Right cardiac atrium (tissue), 5 donors: ENCODE measurements at regions of chrX and their contacts with region 1.

Region 1: GRCh38 chrX:44105228-44105914 is 132.2 kb upstream of the NDP start:
- DNase-seq: no peak
- ATAC-seq: no peak
- H3K4me3 ChIP-seq: no peak overlapping the region
- H3K27ac ChIP-seq: no peak overlapping the region
- H3K4me1 ChIP-seq: no peaks in the 10 kb centered on the region
- H3K27me3 ChIP-seq: no peaks in the 10 kb centered on the region

Region 2: DNA sequence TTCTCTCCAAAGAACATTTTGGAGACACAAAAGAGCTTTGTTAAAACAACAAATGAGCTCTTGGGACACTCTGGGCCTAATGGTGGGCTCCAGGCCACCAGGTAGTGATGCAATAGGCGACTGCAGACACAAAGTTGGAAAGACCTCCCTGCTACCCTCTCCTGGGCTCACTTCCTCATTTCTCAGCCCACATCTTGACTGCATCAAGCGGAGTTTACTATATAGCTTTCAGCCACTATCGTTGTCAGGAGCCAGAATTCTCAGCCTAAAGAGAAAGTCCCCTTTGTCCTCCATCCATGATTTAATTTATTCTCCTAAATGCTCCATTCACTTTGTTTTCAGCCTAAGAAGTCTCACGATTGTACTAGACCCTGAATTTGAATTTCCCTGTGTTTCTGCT is 123.2 kb after region 1 on chrX:
- intact Hi-C with region 1: no loop called
- DNase-seq: peak in 1 of 3 donors; percentile 40
- ATAC-seq: no peak
- H3K4me3 ChIP-seq: no peak overlapping the region
- H3K27ac ChIP-seq: no peak overlapping the region
- H3K4me1 ChIP-seq: no peaks in the 10 kb centered on the region
- H3K27me3 ChIP-seq: no peaks in the 10 kb centered on the region

Region 3: DNA sequence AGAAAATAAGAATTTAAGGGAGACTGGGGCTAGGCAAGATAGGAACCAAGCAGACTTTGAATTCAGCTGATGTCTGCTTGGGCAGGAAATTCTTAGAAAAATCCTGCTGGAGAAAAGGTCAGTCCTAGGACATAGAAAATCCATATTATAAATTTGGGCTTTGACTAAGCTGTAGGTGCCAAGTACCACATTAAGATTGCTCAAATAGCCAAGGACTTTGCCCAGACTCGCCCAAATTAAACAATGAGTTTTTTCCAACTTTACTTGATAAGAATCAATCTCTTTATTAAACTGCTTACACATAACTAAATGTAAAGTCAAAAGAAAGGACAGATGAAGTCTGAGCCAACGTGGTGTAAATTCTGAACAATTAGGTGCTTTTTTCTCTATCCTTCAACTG is 341.8 kb after region 1 on chrX:
- intact Hi-C with region 1: loop called in 1 of 4 experiments (anchors 5 kb)
- DNase-seq: no peak
- ATAC-seq: no peak
- H3K4me3 ChIP-seq: no peak overlapping the region
- H3K27ac ChIP-seq: no peak overlapping the region
- H3K4me1 ChIP-seq: no peaks in the 10 kb centered on the region
- H3K27me3 ChIP-seq: no peaks in the 10 kb centered on the region